ENCODE measurements at regions of chr1 and their contacts with region 1.

Region 1: DNA sequence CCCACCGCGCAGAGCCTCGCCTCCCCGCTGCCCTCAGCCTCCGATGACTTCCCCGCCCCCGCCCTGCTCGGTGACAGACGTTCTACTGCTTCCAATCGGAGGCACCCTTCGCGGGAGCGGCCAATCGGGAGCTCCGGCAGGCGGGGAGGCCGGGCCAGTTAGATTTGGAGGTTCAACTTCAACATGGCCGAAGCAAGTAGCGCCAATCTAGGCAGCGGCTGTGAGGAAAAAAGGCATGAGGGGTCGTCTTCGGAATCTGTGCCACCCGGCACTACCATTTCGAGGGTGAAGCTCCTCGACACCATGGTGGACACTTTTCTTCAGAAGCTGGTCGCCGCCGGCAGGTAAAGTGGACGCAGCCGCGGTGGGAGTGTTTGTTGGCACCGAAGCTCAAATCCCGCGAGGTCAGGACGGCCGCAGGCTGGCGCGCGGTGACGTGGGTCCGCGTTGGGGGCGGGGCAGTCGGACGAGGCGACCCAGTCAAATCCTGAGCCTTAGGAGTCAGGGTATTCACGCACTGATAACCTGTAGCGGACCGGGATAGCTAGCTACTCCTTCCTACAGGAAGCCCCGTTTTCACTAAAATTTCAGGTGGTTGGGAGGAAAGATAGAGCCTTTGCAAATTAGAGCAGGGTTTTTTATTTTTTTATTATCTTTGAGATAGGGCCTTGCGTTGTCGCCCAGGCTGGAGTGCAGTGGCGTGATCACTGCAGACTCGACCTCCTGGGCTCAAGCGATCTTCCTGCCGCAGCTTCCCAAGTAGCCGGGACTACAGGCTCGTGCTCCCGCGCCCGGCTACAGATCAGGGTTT is at the start of gene PMF1:
- DNase-seq: peak; percentile 92
- ATAC-seq: peak; percentile 97
- H3K4me3 Mint-ChIP-seq: peak within 1 kb of the TSS; percentile 96
- H3K27ac Mint-ChIP-seq: peak within 1 kb of the TSS; percentile 98
- H3K4me1 Mint-ChIP-seq: peaks cover 28% of the 10 kb centered on the region
- H3K27me3 Mint-ChIP-seq: no peaks in the 10 kb centered on the region
- CTCF ChIP-seq: no peak
- total RNA-seq, gene PMF1: 68.8 and 75.8 TPM in 2 replicates

Region 2: GRCh38 chr1:156096640-156097391 is 116.2 kb before region 1 on chr1:
- CTCF ChIA-PET with region 1: no interaction called
- POLR2A ChIA-PET with region 1: interaction called, 4 read pairs
- intact Hi-C with region 1: loop called (anchors 5 kb)
- DNase-seq: peak; percentile 85
- ATAC-seq: peak; percentile 86
- H3K4me3 Mint-ChIP-seq: peak overlapping the region; percentile 75
- H3K27ac Mint-ChIP-seq: peak overlapping the region; percentile 99
- H3K4me1 Mint-ChIP-seq: peaks cover 36% of the 10 kb centered on the region
- H3K27me3 Mint-ChIP-seq: no peaks in the 10 kb centered on the region
- CTCF ChIP-seq: no peak

Region 3: DNA sequence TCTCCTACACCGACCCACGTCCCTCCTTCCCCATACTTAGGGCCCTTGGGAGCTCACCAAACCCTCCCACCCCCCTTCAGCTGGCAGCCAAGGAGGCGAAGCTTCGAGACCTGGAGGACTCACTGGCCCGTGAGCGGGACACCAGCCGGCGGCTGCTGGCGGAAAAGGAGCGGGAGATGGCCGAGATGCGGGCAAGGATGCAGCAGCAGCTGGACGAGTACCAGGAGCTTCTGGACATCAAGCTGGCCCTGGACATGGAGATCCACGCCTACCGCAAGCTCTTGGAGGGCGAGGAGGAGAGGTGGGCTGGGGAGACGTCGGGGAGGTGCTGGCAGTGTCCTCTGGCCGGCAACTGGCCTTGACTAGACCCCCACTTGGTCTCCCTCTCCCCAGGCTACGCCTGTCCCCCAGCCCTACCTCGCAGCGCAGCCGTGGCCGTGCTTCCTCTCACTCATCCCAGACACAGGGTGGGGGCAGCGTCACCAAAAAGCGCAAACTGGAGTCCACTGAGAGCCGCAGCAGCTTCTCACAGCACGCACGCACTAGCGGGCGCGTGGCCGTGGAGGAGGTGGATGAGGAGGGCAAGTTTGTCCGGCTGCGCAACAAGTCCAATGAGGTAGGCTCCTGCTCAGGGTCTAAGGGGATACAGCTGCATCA is 77.1 kb before region 1 on chr1:
- CTCF ChIA-PET with region 1: no interaction called
- POLR2A ChIA-PET with region 1: no interaction called
- intact Hi-C with region 1: no loop called
- DNase-seq: no peak
- ATAC-seq: no peak
- H3K4me3 Mint-ChIP-seq: no peak overlapping the region
- H3K27ac Mint-ChIP-seq: no peak overlapping the region
- H3K4me1 Mint-ChIP-seq: no peaks in the 10 kb centered on the region
- H3K27me3 Mint-ChIP-seq: peaks cover 6% of the 10 kb centered on the region
- CTCF ChIP-seq: no peak

Region 4: GRCh38 chr1:156146020-156146768 is 66.8 kb before region 1 on chr1:
- CTCF ChIA-PET with region 1: interaction called, 4 read pairs
- POLR2A ChIA-PET with region 1: interaction called, 71 read pairs
- intact Hi-C with region 1: no loop called
- DNase-seq: no peak
- ATAC-seq: peak; percentile 59
- H3K4me3 Mint-ChIP-seq: peak overlapping the region; percentile 66
- H3K27ac Mint-ChIP-seq: peak overlapping the region; percentile 71
- H3K4me1 Mint-ChIP-seq: peaks cover 48% of the 10 kb centered on the region
- H3K27me3 Mint-ChIP-seq: peaks cover 6% of the 10 kb centered on the region
- CTCF ChIP-seq: no peak

Region 5: GRCh38 chr1:156154317-156154749 is 58.7 kb before region 1 on chr1:
- CTCF ChIA-PET with region 1: interaction called, 4 read pairs
- POLR2A ChIA-PET with region 1: interaction called, 71 read pairs
- intact Hi-C with region 1: loop called (anchors 1 kb)
- DNase-seq: peak; percentile 66
- ATAC-seq: peak; percentile 95
- H3K4me3 Mint-ChIP-seq: peak overlapping the region; percentile 81
- H3K27ac Mint-ChIP-seq: peak overlapping the region; percentile 82
- H3K4me1 Mint-ChIP-seq: peaks cover 95% of the 10 kb centered on the region
- H3K27me3 Mint-ChIP-seq: peaks cover 9% of the 10 kb centered on the region
- CTCF ChIP-seq: no peak

Region 6: GRCh38 chr1:156193488-156194299 is 19.3 kb before region 1 on chr1 and contains the start of gene SLC25A44:
- CTCF ChIA-PET with region 1: interaction called, 5 read pairs
- POLR2A ChIA-PET with region 1: interaction called, 47 read pairs
- intact Hi-C with region 1: loop called (anchors 1 kb)
- DNase-seq: peak; percentile 93
- ATAC-seq: peak; percentile 98
- H3K4me3 Mint-ChIP-seq: peak within 1 kb of the TSS; percentile 96
- H3K27ac Mint-ChIP-seq: peak within 1 kb of the TSS; percentile 91
- H3K4me1 Mint-ChIP-seq: peaks cover 38% of the 10 kb centered on the region
- H3K27me3 Mint-ChIP-seq: no peaks in the 10 kb centered on the region
- CTCF ChIP-seq: no peak
- total RNA-seq, gene SLC25A44: 17.9 and 26.4 TPM in 2 replicates

Region 7: GRCh38 chr1:156198831-156199349 is 14.1 kb before region 1 on chr1:
- CTCF ChIA-PET with region 1: no interaction called
- POLR2A ChIA-PET with region 1: interaction called, 47 read pairs
- intact Hi-C with region 1: loop called (anchors 1 kb)
- DNase-seq: no peak
- ATAC-seq: no peak
- H3K4me3 Mint-ChIP-seq: no peak overlapping the region
- H3K27ac Mint-ChIP-seq: no peak overlapping the region
- H3K4me1 Mint-ChIP-seq: peaks cover 46% of the 10 kb centered on the region
- H3K27me3 Mint-ChIP-seq: no peaks in the 10 kb centered on the region
- CTCF ChIP-seq: no peak

Measured in activated B cell treated with CpG ODN at 0.5 μM for 24 hours (primary cell).